ENCODE measurements at regions of chr16 and their contacts with region 1.

Region 1: DNA sequence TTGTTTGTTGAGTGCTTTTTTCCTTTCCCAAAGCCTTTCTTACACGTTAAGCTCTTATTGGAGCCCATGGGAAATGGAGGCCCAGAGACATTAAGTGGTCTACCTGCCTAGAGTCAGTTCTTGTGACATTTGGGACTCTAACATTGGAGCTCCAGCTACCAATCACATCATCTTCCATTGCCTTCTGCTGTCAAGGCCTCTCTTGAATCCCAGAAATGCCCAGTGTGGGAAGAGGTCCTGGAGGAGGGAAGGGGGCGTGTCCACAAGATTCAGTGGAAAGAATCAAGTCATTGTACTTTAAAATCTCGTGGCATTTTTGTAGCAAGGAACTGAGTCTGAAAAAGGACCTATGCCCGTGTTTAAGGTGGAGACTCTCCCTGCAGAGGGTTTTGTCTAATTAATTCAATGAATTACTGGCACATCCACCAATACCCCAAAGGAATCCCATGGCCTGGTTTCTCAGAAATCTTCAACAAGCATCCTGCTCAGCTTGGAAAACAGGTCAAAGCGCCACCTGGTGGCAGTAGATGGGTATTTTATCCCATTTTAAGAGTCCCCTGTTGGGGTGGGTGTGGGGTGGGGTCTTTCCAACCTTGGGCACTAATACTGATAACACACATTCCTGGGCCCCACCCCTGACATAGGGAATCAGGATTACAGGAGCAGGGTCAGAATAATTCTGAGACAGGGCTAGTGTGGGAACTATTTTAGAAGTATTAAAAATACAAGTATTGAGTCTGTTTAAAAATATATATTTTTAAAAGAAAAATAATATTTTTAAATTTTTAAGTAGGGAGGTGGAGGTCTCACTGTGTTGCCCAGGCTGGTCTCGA is 24.6 kb downstream of the GPT2 start:
- DNase-seq: peak; percentile 5
- H3K4me3 ChIP-seq: no peak overlapping the region
- CTCF ChIP-seq: peak; percentile 58

Region 2: GRCh38 chr16:46883690-46884512 is 24.9 kb before region 1 on chr16 and contains the start of gene GPT2:
- CTCF ChIA-PET with region 1: interaction called, 112 read pairs
- POLR2A ChIA-PET with region 1: interaction called, 3 read pairs
- DNase-seq: peak; percentile 59
- H3K4me3 ChIP-seq: peak within 1 kb of the TSS; percentile 94
- CTCF ChIP-seq: peak; percentile 13

Region 3: DNA sequence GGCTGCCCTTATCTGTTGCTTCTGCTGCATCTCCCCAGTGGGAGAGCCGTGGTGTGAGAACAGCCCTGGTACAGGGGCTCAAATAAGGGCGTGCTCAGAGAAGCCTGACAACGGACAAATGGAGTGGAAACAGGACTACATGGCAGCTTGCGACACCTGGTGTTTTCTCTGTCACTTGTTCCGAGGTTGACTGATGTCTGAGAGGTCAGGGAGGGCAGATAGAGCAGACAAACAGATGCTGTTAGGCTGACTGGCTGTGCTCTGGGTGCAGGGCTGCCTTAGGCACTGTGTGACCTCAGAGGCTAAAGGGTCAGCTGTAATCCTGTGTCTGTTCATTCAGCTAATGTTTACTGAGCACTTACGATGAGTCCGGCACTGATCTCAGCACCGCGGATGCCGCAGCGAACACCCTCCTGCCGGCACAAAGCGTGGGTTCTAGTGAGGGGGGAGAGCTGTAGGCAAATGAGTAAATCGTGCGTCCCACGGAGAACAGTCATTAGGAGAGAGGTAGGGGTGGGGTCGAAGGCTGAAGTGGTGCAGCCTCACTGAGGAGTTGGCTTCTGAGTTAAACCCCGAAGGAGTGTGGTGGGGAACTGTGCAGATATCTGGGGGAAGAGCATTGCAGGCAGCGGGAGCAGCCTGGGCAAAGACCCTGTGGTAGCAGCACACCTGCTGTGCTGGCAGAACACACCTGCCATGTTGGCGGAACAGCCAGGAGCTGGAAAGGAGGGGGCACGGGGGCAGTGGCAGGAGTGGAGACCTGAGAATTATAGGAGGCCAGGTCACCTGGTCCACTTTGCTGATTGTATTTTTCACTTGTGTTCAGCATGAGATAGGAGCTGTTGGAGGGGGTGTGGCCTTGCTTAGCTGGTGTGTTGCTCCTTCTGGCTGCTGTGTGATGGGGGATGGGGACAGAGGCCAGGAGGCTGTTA is 10.4 kb after region 1 on chr16:
- CTCF ChIA-PET with region 1: interaction called, 22 read pairs
- POLR2A ChIA-PET with region 1: no interaction called
- DNase-seq: no peak
- H3K4me3 ChIP-seq: no peak overlapping the region
- CTCF ChIP-seq: no peak

Measured in AG04449 (cell line).